Mammary epithelial cell (primary cell): ENCODE measurements at regions of chr15 and their contacts with region 1.

Region 1: DNA sequence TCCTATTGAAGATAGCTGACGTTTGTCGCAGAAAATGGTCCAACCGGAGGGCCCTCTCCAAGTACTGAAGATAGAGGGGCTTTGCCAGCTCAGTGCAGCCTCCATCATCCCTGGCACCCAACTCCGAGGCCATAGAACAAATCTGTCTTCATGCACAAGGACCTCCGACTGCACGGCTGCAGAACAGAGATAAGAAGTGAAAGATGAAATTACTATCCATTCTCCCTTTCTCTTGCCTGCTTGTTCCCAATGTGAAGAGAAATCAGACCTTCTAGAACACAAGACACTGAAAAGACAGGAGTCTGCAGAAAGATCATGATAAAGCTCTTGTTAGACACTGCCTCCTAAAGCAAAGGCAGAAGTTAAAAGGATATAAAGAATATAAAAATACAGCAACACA is 19.9 kb downstream of the INO80 start:
- DNase-seq: no peak
- H3K4me3 ChIP-seq: no peak overlapping the region
- H3K27ac ChIP-seq: no peak overlapping the region
- H3K4me1 ChIP-seq: no peaks in the 10 kb centered on the region
- H3K27me3 ChIP-seq: no peaks in the 10 kb centered on the region
- CTCF ChIP-seq: no peak

Region 2: GRCh38 chr15:41169781-41170180 is 73.6 kb after region 1 on chr15:
- CTCF ChIA-PET with region 1: no interaction called
- dilution Hi-C with region 1: loop called (anchors 5 kb)
- in situ Hi-C with region 1: no loop called
- intact Hi-C with region 1: no loop called
- DNase-seq: no peak
- H3K4me3 ChIP-seq: no peak overlapping the region
- H3K27ac ChIP-seq: no peak overlapping the region
- H3K4me1 ChIP-seq: no peaks in the 10 kb centered on the region
- H3K27me3 ChIP-seq: no peaks in the 10 kb centered on the region
- CTCF ChIP-seq: no peak